ENCODE measurements at regions of chr14 and their contacts with region 1.

Region 1: DNA sequence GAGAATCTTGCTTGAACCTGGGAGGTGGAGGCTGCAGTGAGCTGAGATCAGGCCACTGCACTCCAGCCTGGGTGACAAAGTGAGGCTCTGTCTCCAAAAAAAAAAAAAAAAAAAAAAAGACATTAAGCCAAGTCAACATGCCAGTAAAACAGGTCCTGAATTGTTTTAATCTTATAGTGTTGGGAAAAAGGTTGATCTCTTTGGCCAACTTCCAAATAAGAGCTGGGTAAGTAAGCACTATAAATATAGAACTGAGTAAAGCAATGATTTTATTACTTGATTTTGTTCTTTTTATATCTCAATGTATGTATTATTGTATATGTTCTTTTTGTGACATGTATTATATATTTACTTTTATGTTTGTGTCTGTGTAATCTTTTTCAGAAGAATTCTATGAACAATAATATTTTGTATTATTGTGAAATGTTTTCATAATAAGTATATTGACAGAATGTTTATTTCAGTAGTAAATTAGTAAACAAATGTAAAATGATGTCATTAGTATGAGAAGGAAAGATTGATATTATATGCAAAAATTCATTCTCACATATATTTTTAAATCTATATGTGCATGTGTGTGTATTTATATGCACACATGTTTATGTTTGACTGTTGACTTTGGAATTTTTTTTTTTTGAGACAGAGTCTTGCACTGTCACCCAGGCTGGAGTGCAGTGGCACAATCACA is 9.6 kb upstream of the AKAP6 start:
- DNase-seq: no peak
- ATAC-seq: no peak
- H3K4me3 ChIP-seq: no peak overlapping the region
- H3K27ac ChIP-seq: no peak overlapping the region
- H3K4me1 ChIP-seq: no peaks in the 10 kb centered on the region; a peak in 1 of 5 replicates
- H3K27me3 ChIP-seq: no peaks in the 10 kb centered on the region
- CTCF ChIP-seq: no peak
- EP300 ChIP-seq: no peak
- POLR2A ChIP-seq: no peak
- RAD21 ChIP-seq: no peak

Region 2: GRCh38 chr14:32366256-32366879 is 46.9 kb after region 1 on chr14:
- CTCF ChIA-PET with region 1: no interaction called
- POLR2A ChIA-PET with region 1: no interaction called
- in situ Hi-C with region 1: no loop called
- intact Hi-C with region 1: loop called (anchors 5 kb)
- DNase-seq: no peak
- ATAC-seq: peak; percentile 62; the same call in 2 of the 3 replicates
- H3K4me3 ChIP-seq: no peak overlapping the region
- H3K27ac ChIP-seq: no peak overlapping the region
- H3K4me1 ChIP-seq: no peaks in the 10 kb centered on the region
- H3K27me3 ChIP-seq: no peaks in the 10 kb centered on the region
- CTCF ChIP-seq: peak in 2 of 3 experiments; percentile 12 to 21; a peak in 2 of 6 replicates
- EP300 ChIP-seq: no peak
- POLR2A ChIP-seq: no peak
- RAD21 ChIP-seq: peak in 1 of 2 experiments; percentile 25; a peak in 1 of 4 replicates